ENCODE measurements at regions of chr14 and their contacts with region 1.

Region 1: GRCh38 chr14:103078093-103078749 is 5.8 kb upstream of the LBHD2 start:
- DNase-seq: peak; percentile 54
- H3K4me3 Mint-ChIP-seq: no peak overlapping the region
- H3K27ac Mint-ChIP-seq: no peak overlapping the region
- H3K4me1 Mint-ChIP-seq: no peaks in the 10 kb centered on the region
- H3K27me3 Mint-ChIP-seq: peaks cover 7% of the 10 kb centered on the region

Region 2: DNA sequence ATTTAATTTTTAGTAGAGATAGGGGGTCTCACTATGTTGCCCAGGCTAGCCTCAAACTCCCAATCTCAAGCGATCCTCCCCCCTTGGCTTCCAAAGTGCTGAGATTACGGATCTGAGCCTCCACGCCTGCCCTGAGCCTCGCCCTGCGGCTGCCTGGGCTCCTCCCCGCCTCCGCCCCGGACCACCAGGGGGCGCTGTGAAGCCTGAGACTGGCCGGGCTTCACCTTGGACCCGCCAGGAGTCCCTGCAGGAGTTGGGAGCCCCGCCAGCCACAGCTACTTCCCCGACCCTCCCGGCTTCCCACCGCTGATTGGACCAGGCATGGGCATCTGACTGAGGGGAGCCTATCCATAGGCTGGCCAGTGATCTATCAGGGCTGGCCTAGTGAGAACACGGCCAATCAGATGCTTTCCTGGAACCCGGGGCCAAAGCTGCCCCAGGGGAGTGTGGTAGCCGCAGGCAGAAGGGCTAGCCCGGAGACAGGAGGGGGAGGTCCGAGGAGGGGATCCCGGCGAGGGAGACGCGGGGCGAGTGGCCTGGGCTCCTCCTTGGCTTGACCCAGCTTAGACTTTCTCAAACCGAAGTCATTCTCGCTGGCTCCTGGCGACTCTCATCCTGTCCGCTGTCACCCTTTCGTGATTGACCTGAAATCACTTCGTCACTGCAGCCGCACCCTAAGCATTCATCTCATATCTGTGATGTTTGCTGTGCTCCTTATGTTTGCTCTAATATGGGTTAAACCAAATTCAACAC is 553.6 kb before region 1 on chr14:
- intact Hi-C with region 1: loop called (anchors 10 kb)
- DNase-seq: peak; percentile 94
- H3K4me3 Mint-ChIP-seq: peak overlapping the region; percentile 92
- H3K27ac Mint-ChIP-seq: peak overlapping the region; percentile 88
- H3K4me1 Mint-ChIP-seq: peaks cover 27% of the 10 kb centered on the region
- H3K27me3 Mint-ChIP-seq: peaks cover 7% of the 10 kb centered on the region

Region 3: DNA sequence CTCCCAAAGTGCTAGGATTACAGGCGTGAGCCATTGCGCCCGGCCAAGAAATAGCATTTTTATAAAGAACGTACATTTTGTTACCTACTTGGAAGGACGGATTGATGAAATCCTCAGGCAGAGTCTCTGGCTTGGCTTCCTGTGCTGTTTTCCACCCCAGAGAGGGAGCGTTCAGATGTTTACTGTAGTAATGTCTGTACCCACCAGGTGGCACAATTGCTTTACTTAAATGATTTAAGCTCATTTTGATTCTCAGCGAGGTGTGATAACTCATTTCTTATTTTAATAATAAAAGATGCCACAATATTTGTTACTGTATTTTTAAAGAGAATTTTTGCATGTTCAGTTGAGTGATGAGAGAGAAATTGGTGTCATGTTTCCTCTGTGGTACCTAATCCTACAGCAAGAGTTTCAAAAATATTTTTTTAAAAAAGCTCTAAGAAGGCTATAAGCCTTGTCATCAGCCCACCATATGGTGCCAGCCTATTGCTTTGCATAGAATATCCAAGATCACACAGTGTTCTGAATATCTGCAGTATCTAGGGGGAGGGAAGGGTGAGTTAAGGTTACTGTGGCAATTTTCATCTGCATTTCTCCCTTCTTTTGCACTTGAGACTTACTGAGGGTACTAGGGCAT is 383.6 kb before region 1 on chr14:
- intact Hi-C with region 1: loop called (anchors 1 kb)
- DNase-seq: peak; percentile 37
- H3K4me3 Mint-ChIP-seq: no peak overlapping the region
- H3K27ac Mint-ChIP-seq: no peak overlapping the region
- H3K4me1 Mint-ChIP-seq: peaks cover 19% of the 10 kb centered on the region
- H3K27me3 Mint-ChIP-seq: no peaks in the 10 kb centered on the region

Region 4: GRCh38 chr14:102986810-102987579 is 91.2 kb before region 1 on chr14:
- intact Hi-C with region 1: no loop called
- DNase-seq: no peak
- H3K4me3 Mint-ChIP-seq: no peak overlapping the region
- H3K27ac Mint-ChIP-seq: no peak overlapping the region
- H3K4me1 Mint-ChIP-seq: no peaks in the 10 kb centered on the region
- H3K27me3 Mint-ChIP-seq: peaks cover 6% of the 10 kb centered on the region

Region 5: DNA sequence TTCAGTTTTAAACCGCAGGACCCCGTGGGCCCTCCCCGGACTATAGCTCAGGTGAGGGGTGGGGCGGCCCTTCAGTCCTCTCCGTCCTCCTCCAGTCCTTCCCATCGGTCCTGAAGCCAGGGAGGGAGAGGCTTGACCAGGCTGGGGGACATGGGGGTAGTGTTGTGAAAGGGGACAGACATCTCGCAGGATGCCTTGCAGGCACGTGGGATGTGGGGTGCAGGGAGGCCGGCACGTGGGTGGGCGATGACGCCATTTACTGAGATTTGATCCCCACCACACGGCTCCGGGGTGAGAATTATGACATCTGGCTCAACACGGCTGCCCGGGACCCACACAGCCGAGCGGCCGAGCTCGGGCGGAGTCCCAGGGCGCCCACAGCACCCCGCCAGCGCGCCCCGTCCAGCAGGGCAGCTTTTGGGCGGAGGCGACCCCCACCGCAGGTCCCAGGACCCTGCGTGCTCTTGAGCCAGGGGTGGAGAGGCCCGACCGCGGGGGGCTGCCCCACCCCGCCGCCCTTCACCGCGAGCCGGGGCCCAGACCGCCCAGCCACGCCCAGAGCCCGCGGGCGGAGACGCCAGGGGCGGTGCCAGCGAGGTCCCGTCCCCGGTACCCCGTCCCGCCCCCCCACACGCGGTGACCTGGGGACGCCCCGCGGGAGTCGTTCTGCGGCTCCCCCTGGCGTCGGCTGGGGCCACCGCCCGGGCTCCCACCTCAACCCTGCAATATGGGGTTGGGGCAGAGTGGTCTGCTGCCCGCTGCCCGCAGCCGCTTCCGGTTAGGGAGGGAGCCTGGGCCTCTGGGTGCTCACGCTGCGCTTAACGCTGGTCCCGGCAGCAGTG is 13.0 kb after region 1 on chr14:
- intact Hi-C with region 1: loop called (anchors 1 kb)
- DNase-seq: peak; percentile 64
- H3K4me3 Mint-ChIP-seq: peak overlapping the region; percentile 19
- H3K27ac Mint-ChIP-seq: no peak overlapping the region
- H3K4me1 Mint-ChIP-seq: no peaks in the 10 kb centered on the region
- H3K27me3 Mint-ChIP-seq: no peaks in the 10 kb centered on the region

Region 6: DNA sequence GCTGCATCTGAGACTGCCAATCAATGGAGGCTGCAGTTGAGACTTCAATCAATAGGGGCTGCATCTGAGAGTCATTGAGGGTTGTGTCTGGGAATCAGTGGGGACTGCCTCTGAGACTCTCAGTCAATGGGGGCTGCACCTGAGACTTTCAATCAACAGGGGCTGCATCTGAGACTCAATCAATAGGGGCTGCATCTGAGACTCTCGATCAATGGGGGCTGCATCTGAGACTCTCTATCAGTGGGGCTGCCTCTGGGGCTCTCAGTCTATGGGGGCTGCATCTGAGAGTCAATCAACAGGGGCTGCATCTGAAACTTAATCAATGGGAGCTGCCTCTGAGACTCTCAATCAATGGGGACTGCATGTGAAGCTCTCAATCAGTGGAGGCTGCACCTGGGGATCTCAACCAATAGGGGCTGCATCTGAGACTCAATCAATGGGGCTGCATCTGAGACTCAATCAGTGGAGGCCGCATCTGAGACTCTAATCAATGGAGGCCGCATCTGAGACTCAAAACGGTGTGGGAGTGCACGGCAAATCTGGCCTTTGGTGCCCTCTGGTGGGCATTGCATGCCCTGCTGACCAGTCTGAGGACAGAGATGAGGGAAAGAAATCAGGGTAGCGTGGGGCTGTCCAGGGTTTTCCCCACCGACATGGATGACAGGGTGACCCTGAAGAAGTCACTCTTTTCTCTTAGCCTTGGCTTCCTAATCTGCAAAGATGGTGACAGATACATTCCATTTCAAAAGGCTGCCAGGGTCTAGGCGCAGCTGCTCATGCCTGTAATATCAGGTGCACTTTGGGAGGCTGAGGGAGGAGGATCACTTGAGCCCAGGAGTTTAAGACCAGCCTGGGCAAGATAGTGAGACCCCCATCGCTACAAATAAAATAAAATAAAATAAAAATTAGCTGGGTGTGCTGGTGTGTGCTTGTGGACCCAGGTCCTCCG is 214.5 kb after region 1 on chr14:
- intact Hi-C with region 1: loop called (anchors 1 kb)
- DNase-seq: peak; percentile 55
- H3K4me3 Mint-ChIP-seq: no peak overlapping the region
- H3K27ac Mint-ChIP-seq: no peak overlapping the region
- H3K4me1 Mint-ChIP-seq: no peaks in the 10 kb centered on the region
- H3K27me3 Mint-ChIP-seq: peaks cover 10% of the 10 kb centered on the region

Region 7: DNA sequence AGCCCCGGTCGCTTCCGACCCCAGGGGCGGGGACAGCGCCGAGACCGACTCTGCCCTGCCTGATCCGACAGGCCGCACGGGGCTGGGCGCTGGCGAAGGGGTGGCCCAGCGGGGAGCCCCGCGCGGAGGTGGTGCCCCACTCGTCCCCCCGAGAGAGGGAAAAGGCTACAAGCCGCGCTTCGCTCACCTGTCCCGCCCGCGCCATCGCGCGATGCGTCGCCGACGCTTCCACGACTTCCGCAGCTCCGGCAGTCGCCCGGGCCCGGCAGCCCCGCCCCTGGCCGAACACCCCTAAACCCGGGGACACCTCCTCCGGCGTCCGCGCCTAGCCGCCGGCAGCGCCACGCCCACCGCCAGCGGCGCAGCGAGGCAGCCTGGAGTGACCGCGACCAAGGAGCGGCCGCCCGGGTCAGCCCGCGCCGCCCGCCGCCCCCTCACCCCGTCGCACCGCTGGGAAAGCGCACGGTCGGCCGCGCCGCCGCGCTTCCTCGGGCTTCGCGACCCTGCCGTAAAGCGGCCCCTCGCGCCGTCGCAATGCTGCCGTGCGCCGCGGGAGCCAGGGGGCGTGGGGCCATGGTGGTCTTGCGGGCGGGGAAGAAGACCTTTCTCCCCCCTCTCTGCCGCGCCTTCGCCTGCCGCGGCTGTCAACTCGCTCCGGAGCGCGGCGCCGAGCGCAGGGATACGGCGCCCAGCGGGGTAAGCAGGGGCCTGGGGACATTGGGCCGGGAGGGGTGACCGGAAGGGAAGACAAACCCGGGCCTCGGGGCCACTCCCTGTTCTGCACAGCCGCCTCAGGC is 484.4 kb after region 1 on chr14 and contains the starts of genes BAG5 and COA8:
- intact Hi-C with region 1: loop called (anchors 5 kb)
- DNase-seq: peak; percentile 83
- H3K4me3 Mint-ChIP-seq: peak within 1 kb of the TSS; percentile 96
- H3K27ac Mint-ChIP-seq: peak within 1 kb of the TSS; percentile 94
- H3K4me1 Mint-ChIP-seq: peaks cover 29% of the 10 kb centered on the region
- H3K27me3 Mint-ChIP-seq: no peaks in the 10 kb centered on the region
- total RNA-seq, gene BAG5: 33.8 and 34.1 TPM in 2 replicates
- total RNA-seq, gene COA8: 37.2 and 39.7 TPM in 2 replicates